H1 (cell line): ENCODE measurements at regions of chr7 and their contacts with region 1.

Region 1: GRCh38 chr7:27774717-27775328 is 34.9 kb downstream of the TAX1BP1 start:
- DNase-seq: no peak
- H3K4me3 ChIP-seq: no peak overlapping the region
- H3K27ac ChIP-seq: no peak overlapping the region
- H3K4me1 ChIP-seq: no peaks in the 10 kb centered on the region
- H3K27me3 ChIP-seq: no peaks in the 10 kb centered on the region
- CTCF ChIP-seq: peak in 1 of 3 experiments; percentile 53; a peak in 2 of 4 replicates
- EP300 ChIP-seq: no peak
- POLR2A ChIP-seq: no peak
- RAD21 ChIP-seq: peak; percentile 64 to 66

Region 2: GRCh38 chr7:27745064-27745583 is 29.7 kb before region 1 on chr7:
- CTCF ChIA-PET with region 1: interaction called, 12 read pairs
- POLR2A ChIA-PET with region 1: no interaction called
- DNase-seq: no peak
- H3K4me3 ChIP-seq: no peak overlapping the region
- H3K27ac ChIP-seq: no peak overlapping the region
- H3K4me1 ChIP-seq: peaks cover 0 to 4% (median 1%) of the 10 kb centered on the region in 4 experiments; a peak in 2 of 7 replicates
- H3K27me3 ChIP-seq: peaks cover 0 to 1% (median 0%) of the 10 kb centered on the region in 4 experiments; a peak in 1 of 7 replicates
- CTCF ChIP-seq: peak in 2 of 3 experiments; percentile 54 to 80; a peak in 2 of 4 replicates
- EP300 ChIP-seq: no peak
- POLR2A ChIP-seq: no peak
- RAD21 ChIP-seq: peak; percentile 72 to 75

Region 3: GRCh38 chr7:27812703-27813102 is 37.9 kb after region 1 on chr7:
- CTCF ChIA-PET with region 1: no interaction called
- POLR2A ChIA-PET with region 1: no interaction called
- DNase-seq: no peak
- H3K4me3 ChIP-seq: no peak overlapping the region
- H3K27ac ChIP-seq: no peak overlapping the region
- H3K4me1 ChIP-seq: no peaks in the 10 kb centered on the region
- H3K27me3 ChIP-seq: no peaks in the 10 kb centered on the region
- CTCF ChIP-seq: no peak
- EP300 ChIP-seq: no peak
- POLR2A ChIP-seq: no peak
- RAD21 ChIP-seq: no peak